ENCODE measurements at regions of chr12 and their contacts with region 1.

Region 1: DNA sequence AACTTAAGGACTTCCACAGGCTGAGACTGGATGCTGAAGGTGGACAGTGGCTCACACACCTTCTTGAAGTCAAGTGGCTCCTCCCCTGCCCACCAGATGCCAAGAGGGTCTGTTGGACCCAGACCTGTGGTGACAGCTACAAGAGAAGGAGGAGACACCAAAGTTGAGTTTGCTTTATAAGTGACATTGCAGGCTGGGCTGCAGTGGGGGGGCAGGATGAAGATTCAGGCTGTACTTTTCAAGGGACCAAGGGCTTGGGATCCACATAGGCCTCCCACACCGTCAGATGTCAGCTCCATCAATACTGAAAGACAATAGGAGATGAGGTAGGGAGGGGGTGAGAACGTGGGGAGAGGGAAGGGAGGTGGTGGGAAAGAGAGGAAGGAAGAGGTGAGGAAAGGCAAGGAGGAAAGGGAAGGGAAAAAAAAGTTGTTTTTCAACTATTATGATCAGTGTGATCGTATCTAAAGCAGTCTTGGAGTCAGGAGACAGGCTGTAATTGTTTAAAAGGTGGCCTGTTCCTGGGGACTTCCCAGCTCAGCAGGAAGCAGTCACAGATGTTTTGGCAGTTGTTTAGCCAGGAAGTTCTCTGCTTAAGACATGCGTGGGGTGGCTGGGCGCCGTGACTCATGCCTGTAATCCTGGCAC is 84.1 kb upstream of the RESF1 start:
- DNase-seq: peak; percentile 90

Region 2: DNA sequence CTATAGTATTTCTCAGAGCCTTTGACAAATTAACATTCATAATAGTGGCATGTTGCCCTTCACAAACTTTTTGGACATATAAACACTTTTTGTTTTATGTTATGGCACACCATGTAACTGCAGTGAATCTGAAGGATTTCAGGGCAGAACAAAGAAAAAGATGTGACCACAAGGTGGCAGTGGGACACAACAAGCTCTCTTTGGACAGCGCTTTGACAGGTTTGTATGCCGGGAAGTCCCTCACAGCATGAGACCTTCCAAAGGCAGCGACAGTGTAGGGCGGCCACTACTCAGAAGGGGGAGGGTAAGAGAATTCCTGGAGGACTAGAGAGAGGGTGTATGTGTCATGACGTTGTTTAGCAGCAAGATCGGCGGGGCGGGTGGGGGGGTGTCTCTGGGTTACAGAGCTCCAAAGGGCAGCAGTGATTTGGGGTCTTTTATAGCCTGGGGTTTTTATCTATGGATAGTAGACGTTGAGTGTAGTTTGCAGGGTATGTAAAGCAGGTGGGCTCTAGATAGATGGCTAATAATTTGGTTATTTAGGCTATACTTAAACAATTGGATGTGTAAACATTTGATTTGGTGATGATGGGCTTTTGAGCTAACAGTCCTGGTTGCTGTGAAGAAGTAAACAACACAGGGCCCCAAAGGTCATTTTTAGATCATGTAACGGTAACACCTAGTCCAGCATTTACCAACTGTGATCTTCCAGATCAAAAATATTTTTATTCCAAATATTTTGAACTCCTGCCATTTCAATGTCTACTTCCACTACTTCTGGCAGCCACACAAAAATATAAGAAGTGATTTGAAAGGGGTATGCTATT is 192.7 kb before region 1 on chr12:
- in situ Hi-C with region 1: loop called (anchors 25 kb)
- DNase-seq: peak; percentile 92

Measured in KBM-7 (cell line).